Breast epithelium (tissue), 4 donors: ENCODE measurements at regions of chr12 and their contacts with region 1.

Region 1: GRCh38 chr12:52879394-52880351 is 25.2 kb downstream of the KRT8 start:
- DNase-seq: peak; percentile 84 to 86
- H3K4me3 ChIP-seq: peak overlapping the region; percentile 6 to 52 (median 33)
- H3K27ac ChIP-seq: peak overlapping the region; percentile 82 to 88
- H3K4me1 ChIP-seq: peaks cover 7 to 11% of the 10 kb centered on the region in 2 donors
- H3K27me3 ChIP-seq: no peaks in the 10 kb centered on the region
- CTCF ChIP-seq: peak; percentile 78 to 89 (median 87)
- POLR2A ChIP-seq: no peak

Region 2: GRCh38 chr12:52362118-52362726 is 517.5 kb before region 1 on chr12:
- intact Hi-C with region 1: loop called (anchors 10 kb)
- DNase-seq: peak in 1 of 2 donors; percentile 48
- H3K4me3 ChIP-seq: no peak overlapping the region
- H3K27ac ChIP-seq: no peak overlapping the region
- H3K4me1 ChIP-seq: no peaks in the 10 kb centered on the region
- H3K27me3 ChIP-seq: no peaks in the 10 kb centered on the region
- CTCF ChIP-seq: no peak
- POLR2A ChIP-seq: no peak

Region 3: GRCh38 chr12:52582971-52583456 is 296.7 kb before region 1 on chr12:
- intact Hi-C with region 1: loop called (anchors 5 kb)
- DNase-seq: peak; percentile 68 to 75
- H3K4me3 ChIP-seq: no peak overlapping the region
- H3K27ac ChIP-seq: peak overlapping the region; percentile 52 to 53
- H3K4me1 ChIP-seq: no peaks in the 10 kb centered on the region
- H3K27me3 ChIP-seq: no peaks in the 10 kb centered on the region
- CTCF ChIP-seq: peak; percentile 76 to 83 (median 82)
- POLR2A ChIP-seq: no peak

Region 4: DNA sequence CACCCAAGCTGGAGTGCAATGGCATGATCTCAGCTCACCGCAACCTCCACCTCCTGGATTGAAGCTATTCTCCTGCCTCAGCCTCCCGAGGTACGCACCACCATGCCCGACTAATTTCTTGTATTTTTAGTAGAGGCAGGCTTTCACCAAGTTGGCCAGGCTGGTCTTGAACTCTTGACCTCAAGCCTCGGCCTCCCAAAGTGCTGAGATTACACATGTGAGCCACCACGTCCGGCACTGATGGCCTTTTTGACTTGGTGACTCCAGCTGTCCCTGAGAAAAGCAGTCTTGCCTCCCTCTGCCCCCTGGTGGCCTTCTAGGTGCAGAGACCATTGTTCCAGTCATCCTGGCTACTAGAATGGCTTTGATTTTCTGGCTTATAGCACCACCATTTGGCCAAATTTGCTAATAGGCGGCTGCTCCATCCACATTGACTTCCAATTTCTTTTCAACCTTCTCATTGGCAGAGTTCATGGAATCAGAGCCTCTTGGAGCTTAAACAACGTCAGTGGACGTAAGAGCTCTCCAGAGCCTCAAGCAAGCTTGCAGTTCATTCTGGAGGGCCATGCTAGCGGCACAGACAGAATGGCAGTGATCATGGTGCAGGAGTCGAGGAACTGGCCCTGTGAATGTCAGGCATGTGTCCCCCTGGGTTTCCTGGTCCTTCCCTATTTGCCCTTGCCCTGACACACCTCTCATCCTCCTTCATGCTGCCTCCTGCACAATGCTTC is 101.2 kb after region 1 on chr12:
- intact Hi-C with region 1: loop called (anchors 5 kb)
- DNase-seq: peak; percentile 88 to 89
- H3K4me3 ChIP-seq: no peak overlapping the region
- H3K27ac ChIP-seq: no peak overlapping the region
- H3K4me1 ChIP-seq: no peaks in the 10 kb centered on the region
- H3K27me3 ChIP-seq: no peaks in the 10 kb centered on the region
- CTCF ChIP-seq: peak; percentile 96 to 100 (median 100)
- POLR2A ChIP-seq: no peak

Region 5: DNA sequence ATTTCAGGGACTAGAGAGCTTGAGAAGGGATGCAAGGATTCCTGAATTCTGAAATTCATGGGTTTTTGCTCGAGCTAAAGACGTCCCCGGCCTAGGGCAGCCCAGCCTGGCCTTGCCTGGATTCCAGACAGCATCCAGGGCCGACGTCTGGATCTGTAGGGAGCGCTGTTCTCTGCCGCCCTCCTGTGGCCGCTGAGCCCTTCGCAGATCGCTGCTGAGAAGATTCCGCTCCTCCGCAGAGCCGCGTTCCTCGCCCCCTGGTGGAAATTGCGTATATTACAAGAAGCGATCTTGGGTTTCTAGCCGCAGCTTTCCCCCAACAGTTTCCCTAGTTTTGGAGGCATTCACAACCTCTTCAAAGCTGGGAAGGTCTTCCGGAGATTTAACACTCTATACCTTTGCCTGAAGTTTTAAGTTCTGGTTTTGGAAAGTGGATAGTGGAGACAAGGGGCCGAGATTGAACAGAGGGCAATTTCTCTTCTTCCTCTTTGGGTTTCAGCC is 867.0 kb after region 1 on chr12:
- intact Hi-C with region 1: no loop called
- DNase-seq: peak; percentile 86 to 93
- H3K4me3 ChIP-seq: no peak overlapping the region
- H3K27ac ChIP-seq: no peak overlapping the region
- H3K4me1 ChIP-seq: peaks cover 0 to 4% of the 10 kb centered on the region in 2 donors
- H3K27me3 ChIP-seq: peaks cover 0 to 24% of the 10 kb centered on the region in 2 donors
- CTCF ChIP-seq: peak; percentile 100
- POLR2A ChIP-seq: no peak